Panc1 (cell line): ENCODE measurements at regions of chr3 and their contacts with region 1.

Region 1: DNA sequence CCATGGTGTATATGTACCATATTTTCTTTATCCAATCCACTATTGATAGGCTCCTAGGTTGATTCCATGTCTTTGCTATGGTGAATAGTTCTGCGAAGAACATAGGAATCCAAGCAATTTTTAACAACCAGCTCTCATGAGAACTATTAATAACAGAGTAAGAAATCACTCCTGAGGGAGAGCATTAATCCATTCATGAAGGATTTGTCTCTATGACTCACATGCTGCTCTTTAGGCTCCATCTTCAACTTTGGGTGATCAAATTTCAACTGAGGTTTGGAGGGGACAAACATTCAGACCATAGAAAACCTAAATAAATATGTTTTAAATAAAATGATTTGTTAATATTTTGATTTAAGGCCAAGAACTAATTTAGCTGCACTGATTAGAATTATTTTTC is 147.4 kb downstream of the NSUN3 start:
- DNase-seq: no peak
- ATAC-seq: no peak
- H3K4me3 ChIP-seq: no peak overlapping the region
- H3K27ac ChIP-seq: no peak overlapping the region
- H3K4me1 ChIP-seq: no peaks in the 10 kb centered on the region
- H3K27me3 ChIP-seq: no peaks in the 10 kb centered on the region
- CTCF ChIP-seq: no peak

Region 2: DNA sequence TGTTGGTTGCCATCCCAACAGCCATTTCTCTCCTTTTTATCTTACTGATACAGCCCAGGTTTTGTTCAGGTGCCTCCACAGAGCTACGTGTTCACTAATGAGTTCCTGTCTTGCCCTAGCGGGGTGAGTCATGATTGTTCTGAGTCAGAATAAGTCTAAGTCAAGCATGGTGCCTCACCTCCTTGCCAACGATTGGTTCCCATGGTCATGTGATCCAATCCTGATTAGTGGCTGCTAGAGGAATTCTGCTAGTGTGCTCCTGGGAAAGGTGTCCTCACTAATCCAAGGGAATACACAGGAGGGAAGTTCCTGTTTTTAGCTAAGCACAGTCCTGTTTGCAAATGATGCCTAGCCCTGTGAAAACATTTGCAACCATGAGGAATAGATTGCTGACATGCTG is 47.6 kb before region 1 on chr3:
- CTCF ChIA-PET with region 1: no interaction called
- POLR2A ChIA-PET with region 1: no interaction called
- in situ Hi-C with region 1: no loop called
- intact Hi-C with region 1: loop called (anchors 10 kb)
- DNase-seq: no peak
- ATAC-seq: no peak; the same call in 1 of the 2 replicates
- H3K4me3 ChIP-seq: no peak overlapping the region
- H3K27ac ChIP-seq: no peak overlapping the region
- H3K4me1 ChIP-seq: no peaks in the 10 kb centered on the region
- H3K27me3 ChIP-seq: peaks cover 3% of the 10 kb centered on the region; the same call in 1 of the 2 replicates
- CTCF ChIP-seq: no peak

Region 3: GRCh38 chr3:94935764-94936501 is 725.7 kb after region 1 on chr3:
- CTCF ChIA-PET with region 1: no interaction called
- POLR2A ChIA-PET with region 1: interaction called, 13 read pairs
- in situ Hi-C with region 1: no loop called
- intact Hi-C with region 1: no loop called
- DNase-seq: no peak
- ATAC-seq: no peak
- H3K4me3 ChIP-seq: no peak overlapping the region
- H3K27ac ChIP-seq: no peak overlapping the region
- H3K4me1 ChIP-seq: no peaks in the 10 kb centered on the region
- H3K27me3 ChIP-seq: no peaks in the 10 kb centered on the region
- CTCF ChIP-seq: no peak